ENCODE measurements at regions of chr22 and their contacts with region 1.

Region 1: GRCh38 chr22:38214256-38215056 is 12.7 kb downstream of the MAFF start:
- DNase-seq: peak; percentile 24 to 84 (median 64)
- ATAC-seq: peak; percentile 83 to 89 (median 84)
- H3K4me3 ChIP-seq: peak overlapping the region; percentile 36 to 56
- H3K4me3 Mint-ChIP-seq: peak overlapping the region; percentile 53 to 62 (median 60)
- H3K27ac ChIP-seq: peak overlapping the region; percentile 34
- H3K27ac Mint-ChIP-seq: peak overlapping the region in 1 of 2 donors; percentile 55
- H3K4me1 ChIP-seq: peaks cover 2 to 34% of the 10 kb centered on the region in 2 experiments
- H3K4me1 Mint-ChIP-seq: peaks cover 27 to 38% (median 34%) of the 10 kb centered on the region in 3 donors
- H3K27me3 ChIP-seq: no peaks in the 10 kb centered on the region
- H3K27me3 Mint-ChIP-seq: no peaks in the 10 kb centered on the region

Region 2: GRCh38 chr22:37930270-37930951 is 284.0 kb before region 1 on chr22:
- CTCF ChIA-PET with region 1: no interaction called
- POLR2A ChIA-PET with region 1: no interaction called
- DNase-seq: peak in 1 of 35 experiments; percentile 26
- ATAC-seq: peak in 1 of 4 experiments; percentile 24
- H3K4me3 ChIP-seq: no peak overlapping the region
- H3K4me3 Mint-ChIP-seq: no peak overlapping the region
- H3K27ac ChIP-seq: no peak overlapping the region
- H3K27ac Mint-ChIP-seq: no peak overlapping the region
- H3K4me1 ChIP-seq: peaks cover 0 to 9% of the 10 kb centered on the region in 2 experiments
- H3K4me1 Mint-ChIP-seq: peaks cover 12 to 15% (median 15%) of the 10 kb centered on the region in 3 donors
- H3K27me3 ChIP-seq: no peaks in the 10 kb centered on the region
- H3K27me3 Mint-ChIP-seq: no peaks in the 10 kb centered on the region

Region 3: GRCh38 chr22:38187413-38188212 is 26.8 kb before region 1 on chr22:
- CTCF ChIA-PET with region 1: no interaction called
- POLR2A ChIA-PET with region 1: interaction called in 1 of 2 experiments, 19 read pairs
- DNase-seq: no peak
- ATAC-seq: no peak
- H3K4me3 ChIP-seq: no peak overlapping the region
- H3K4me3 Mint-ChIP-seq: no peak overlapping the region
- H3K27ac ChIP-seq: no peak overlapping the region
- H3K27ac Mint-ChIP-seq: no peak overlapping the region
- H3K4me1 ChIP-seq: no peaks in the 10 kb centered on the region
- H3K4me1 Mint-ChIP-seq: peaks cover 0 to 3% (median 0%) of the 10 kb centered on the region in 3 donors
- H3K27me3 ChIP-seq: no peaks in the 10 kb centered on the region
- H3K27me3 Mint-ChIP-seq: peaks cover 2 to 4% of the 10 kb centered on the region in 2 donors

Region 4: DNA sequence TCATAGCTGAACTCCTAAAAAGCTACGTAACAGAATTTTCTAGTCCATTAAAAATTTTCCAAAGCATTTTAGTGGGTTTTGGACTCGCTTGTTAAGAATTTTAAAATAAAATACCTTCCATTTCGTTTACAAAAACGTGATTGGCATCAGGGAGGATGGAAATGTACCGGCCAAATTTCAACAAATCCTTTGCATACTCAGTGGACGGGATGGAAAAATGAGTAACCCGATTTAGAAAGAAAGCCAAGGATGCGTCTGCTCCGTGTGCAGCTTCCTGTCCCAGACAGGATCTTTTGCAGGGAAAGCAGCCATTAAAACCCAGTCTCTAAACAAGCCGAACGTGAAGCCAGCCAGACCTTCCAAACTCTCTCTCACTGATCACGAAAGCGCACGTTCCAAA is 42.7 kb after region 1 on chr22:
- CTCF ChIA-PET with region 1: no interaction called
- POLR2A ChIA-PET with region 1: interaction called in 1 of 2 experiments, 18 read pairs
- DNase-seq: no peak
- ATAC-seq: no peak
- H3K4me3 ChIP-seq: no peak overlapping the region
- H3K4me3 Mint-ChIP-seq: no peak overlapping the region
- H3K27ac ChIP-seq: no peak overlapping the region
- H3K27ac Mint-ChIP-seq: no peak overlapping the region
- H3K4me1 ChIP-seq: peaks cover 2 to 13% of the 10 kb centered on the region in 2 experiments
- H3K4me1 Mint-ChIP-seq: peaks cover 22 to 34% (median 31%) of the 10 kb centered on the region in 3 donors
- H3K27me3 ChIP-seq: no peaks in the 10 kb centered on the region
- H3K27me3 Mint-ChIP-seq: no peaks in the 10 kb centered on the region

Measured in T-cell (primary cell).